WTC11 (cell line): ENCODE measurements at regions of chr12 and their contacts with region 1.

Region 1: GRCh38 chr12:14810953-14811483 is 3.0 kb downstream of the SMCO3 start:
- DNase-seq: peak; percentile 49
- ATAC-seq: peak; percentile 96
- H3K4me3 Mint-ChIP-seq: no peak overlapping the region
- H3K27ac Mint-ChIP-seq: no peak overlapping the region
- H3K4me1 Mint-ChIP-seq: no peaks in the 10 kb centered on the region
- H3K27me3 Mint-ChIP-seq: no peaks in the 10 kb centered on the region
- CTCF ChIP-seq: no peak

Region 2: DNA sequence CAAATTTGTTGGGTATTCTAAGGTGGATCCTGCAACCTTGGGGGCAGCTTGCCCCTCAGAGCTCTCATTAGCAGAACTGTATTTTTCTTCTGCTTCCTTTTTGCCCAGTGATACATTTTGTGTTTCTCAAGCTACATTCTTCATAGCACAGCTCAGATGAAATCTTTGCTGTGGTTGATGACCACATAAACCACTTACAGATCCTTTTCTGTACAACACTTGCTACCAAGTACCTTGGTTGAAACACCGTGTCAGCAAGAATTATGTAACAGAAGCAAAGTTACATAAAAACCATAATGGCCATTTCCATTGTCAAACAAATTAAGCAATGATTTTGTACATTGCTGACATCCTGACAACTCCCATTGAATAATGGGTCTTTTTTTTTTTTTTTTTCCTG is 233.7 kb before region 1 on chr12:
- CTCF ChIA-PET with region 1: no interaction called
- POLR2A ChIA-PET with region 1: no interaction called
- DNase-seq: no peak
- ATAC-seq: no peak
- H3K4me3 Mint-ChIP-seq: no peak overlapping the region
- H3K27ac Mint-ChIP-seq: no peak overlapping the region
- H3K4me1 Mint-ChIP-seq: peaks cover 9% of the 10 kb centered on the region
- H3K27me3 Mint-ChIP-seq: no peaks in the 10 kb centered on the region
- CTCF ChIP-seq: no peak

Region 3: GRCh38 chr12:14795028-14795448 is 16.0 kb before region 1 on chr12:
- CTCF ChIA-PET with region 1: no interaction called
- POLR2A ChIA-PET with region 1: no interaction called
- DNase-seq: no peak
- ATAC-seq: no peak
- H3K4me3 Mint-ChIP-seq: no peak overlapping the region
- H3K27ac Mint-ChIP-seq: no peak overlapping the region
- H3K4me1 Mint-ChIP-seq: no peaks in the 10 kb centered on the region
- H3K27me3 Mint-ChIP-seq: no peaks in the 10 kb centered on the region
- CTCF ChIP-seq: no peak

Region 4: DNA sequence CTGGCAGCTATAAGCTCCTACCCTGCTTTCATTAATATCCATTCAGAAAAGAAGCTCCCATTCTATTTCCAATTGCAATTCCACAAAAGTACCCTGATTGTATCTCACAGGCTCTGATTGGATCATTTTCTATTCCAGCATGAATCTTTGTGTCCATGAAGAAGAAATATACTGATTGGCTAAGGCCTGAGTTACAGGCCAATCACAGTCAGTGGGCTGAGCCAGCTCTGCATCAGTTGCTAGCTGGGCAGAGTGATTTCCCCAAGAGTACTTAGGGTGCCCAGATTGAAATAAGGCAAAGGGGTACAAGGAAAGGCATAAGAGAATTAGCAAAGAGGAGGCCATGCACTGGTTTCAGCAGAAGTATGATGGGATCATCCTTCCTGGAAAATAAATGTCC is 17.9 kb after region 1 on chr12:
- CTCF ChIA-PET with region 1: interaction called, 10 read pairs
- POLR2A ChIA-PET with region 1: no interaction called
- DNase-seq: no peak
- ATAC-seq: peak; percentile 91
- H3K4me3 Mint-ChIP-seq: no peak overlapping the region
- H3K27ac Mint-ChIP-seq: no peak overlapping the region
- H3K4me1 Mint-ChIP-seq: peaks cover 4% of the 10 kb centered on the region
- H3K27me3 Mint-ChIP-seq: no peaks in the 10 kb centered on the region
- CTCF ChIP-seq: no peak

Region 5: GRCh38 chr12:14995583-14996425 is 184.8 kb after region 1 on chr12:
- CTCF ChIA-PET with region 1: interaction called, 44 read pairs
- POLR2A ChIA-PET with region 1: no interaction called
- DNase-seq: no peak
- ATAC-seq: no peak
- H3K4me3 Mint-ChIP-seq: no peak overlapping the region
- H3K27ac Mint-ChIP-seq: no peak overlapping the region
- H3K4me1 Mint-ChIP-seq: no peaks in the 10 kb centered on the region
- H3K27me3 Mint-ChIP-seq: no peaks in the 10 kb centered on the region
- CTCF ChIP-seq: no peak; the same call in none of the 2 replicates